ENCODE measurements at regions of chr3 and their contacts with region 1.

Region 1: DNA sequence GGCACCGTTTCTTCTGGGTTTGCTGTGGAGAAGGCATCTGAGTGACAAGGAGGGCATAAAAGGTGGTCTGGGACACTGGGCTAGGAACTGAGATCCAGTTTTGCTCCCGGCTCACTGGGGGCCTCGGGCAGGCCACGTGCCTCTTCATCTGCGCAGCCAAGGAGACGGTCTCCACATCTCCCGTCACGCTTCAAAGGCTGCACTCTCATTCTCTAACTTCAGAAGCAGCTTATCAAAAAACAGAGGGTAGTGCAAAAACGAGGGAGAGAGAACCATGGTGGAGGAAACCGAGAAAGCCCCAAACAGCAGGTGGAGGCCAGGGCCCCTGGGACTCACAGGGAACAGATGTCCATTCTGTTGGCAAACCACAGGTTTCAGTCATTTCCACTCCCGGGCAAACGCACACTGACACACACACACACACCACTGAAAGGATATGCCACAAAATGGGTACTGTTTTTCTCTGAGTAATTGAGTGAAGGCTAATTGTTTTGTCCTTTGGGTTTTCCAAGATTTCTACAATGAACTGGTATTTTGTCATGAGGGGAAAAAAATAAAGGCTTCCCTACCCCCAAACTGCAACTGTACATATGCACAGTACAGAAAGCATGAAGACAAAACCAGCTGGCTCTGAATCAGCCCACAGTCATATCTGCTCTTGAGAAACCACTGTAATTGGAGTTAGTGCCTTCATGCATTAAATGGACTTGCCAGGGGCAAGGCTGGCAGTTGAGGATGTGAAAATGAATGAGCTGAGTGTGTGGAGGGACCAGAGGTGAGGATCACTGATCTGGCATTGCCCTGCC is 71.9 kb downstream of the MGLL start:
- DNase-seq: no peak
- H3K4me3 ChIP-seq: no peak overlapping the region
- H3K27ac ChIP-seq: no peak overlapping the region
- H3K4me1 ChIP-seq: no peaks in the 10 kb centered on the region
- H3K27me3 ChIP-seq: no peaks in the 10 kb centered on the region
- CTCF ChIP-seq: no peak
- EP300 ChIP-seq: no peak
- POLR2A ChIP-seq: no peak
- RAD21 ChIP-seq: no peak

Region 2: DNA sequence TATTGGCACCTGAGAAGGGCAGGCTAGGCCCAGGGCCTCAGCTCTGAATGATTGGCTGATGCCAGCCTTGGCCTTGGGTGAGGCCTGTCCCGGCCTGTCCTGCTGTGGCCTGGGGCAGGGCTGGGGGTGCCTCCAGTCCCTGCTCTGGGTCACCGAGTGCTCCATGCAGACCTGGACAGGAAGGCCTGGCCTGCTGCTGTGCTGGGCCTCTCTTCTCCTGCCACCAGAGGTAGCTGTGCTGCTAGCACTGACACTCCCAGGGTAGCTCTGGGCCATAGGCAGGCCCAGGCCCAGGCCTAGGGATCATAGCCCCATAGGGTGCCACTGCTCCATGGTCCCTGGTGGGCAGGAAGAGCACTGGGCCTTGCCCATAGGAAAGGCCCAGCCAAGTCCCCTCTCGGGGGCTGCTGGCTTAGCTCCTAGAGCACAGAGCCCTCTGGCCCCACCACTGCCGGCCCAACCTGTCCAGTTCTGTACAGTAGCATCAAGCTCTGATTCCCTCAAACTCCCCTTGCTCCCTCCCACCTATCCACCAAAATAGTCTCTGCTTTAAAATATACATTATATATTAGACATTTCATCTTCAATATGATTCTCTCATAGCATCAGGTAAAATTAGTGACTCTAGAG is 59.5 kb before region 1 on chr3:
- CTCF ChIA-PET with region 1: interaction called, 23 read pairs
- POLR2A ChIA-PET with region 1: no interaction called
- DNase-seq: peak in 1 of 2 experiments; percentile 62
- H3K4me3 ChIP-seq: no peak overlapping the region
- H3K27ac ChIP-seq: no peak overlapping the region
- H3K4me1 ChIP-seq: peaks cover 0 to 22% (median 5%) of the 10 kb centered on the region in 4 experiments; a peak in 6 of 7 replicates
- H3K27me3 ChIP-seq: no peaks in the 10 kb centered on the region
- CTCF ChIP-seq: peak in 2 of 3 experiments; percentile 87 to 93; a peak in 3 of 4 replicates
- EP300 ChIP-seq: no peak
- POLR2A ChIP-seq: no peak
- RAD21 ChIP-seq: peak; percentile 80 to 90

Region 3: GRCh38 chr3:127710155-127710941 is 40.1 kb before region 1 on chr3:
- CTCF ChIA-PET with region 1: interaction called, 10 read pairs
- POLR2A ChIA-PET with region 1: no interaction called
- DNase-seq: no peak
- H3K4me3 ChIP-seq: no peak overlapping the region
- H3K27ac ChIP-seq: no peak overlapping the region
- H3K4me1 ChIP-seq: peaks cover 0 to 11% (median 2%) of the 10 kb centered on the region in 4 experiments; a peak in 3 of 7 replicates
- H3K27me3 ChIP-seq: no peaks in the 10 kb centered on the region
- CTCF ChIP-seq: no peak
- EP300 ChIP-seq: no peak
- POLR2A ChIP-seq: no peak
- RAD21 ChIP-seq: no peak

Region 4: GRCh38 chr3:127735767-127736704 is 14.4 kb before region 1 on chr3:
- CTCF ChIA-PET with region 1: interaction called, 11 read pairs
- POLR2A ChIA-PET with region 1: no interaction called
- DNase-seq: no peak
- H3K4me3 ChIP-seq: no peak overlapping the region
- H3K27ac ChIP-seq: no peak overlapping the region
- H3K4me1 ChIP-seq: peaks cover 0 to 13% (median 5%) of the 10 kb centered on the region in 4 experiments; a peak in 5 of 7 replicates
- H3K27me3 ChIP-seq: peaks cover 0 to 2% (median 0%) of the 10 kb centered on the region in 4 experiments; a peak in 3 of 7 replicates
- CTCF ChIP-seq: no peak
- EP300 ChIP-seq: no peak
- POLR2A ChIP-seq: no peak
- RAD21 ChIP-seq: no peak

Region 5: GRCh38 chr3:127762077-127762786 is 11.8 kb after region 1 on chr3:
- CTCF ChIA-PET with region 1: interaction called, 35 read pairs
- POLR2A ChIA-PET with region 1: no interaction called
- DNase-seq: no peak
- H3K4me3 ChIP-seq: no peak overlapping the region
- H3K27ac ChIP-seq: no peak overlapping the region
- H3K4me1 ChIP-seq: no peaks in the 10 kb centered on the region
- H3K27me3 ChIP-seq: 0 out of 7 replicates have a peak, but pooled peaks cover 0 to 2% (median 0%) of the 10 kb centered on the region in 4 experiments
- CTCF ChIP-seq: no peak
- EP300 ChIP-seq: no peak
- POLR2A ChIP-seq: no peak
- RAD21 ChIP-seq: no peak